K562 (cell line): ENCODE measurements at regions of chr10 and their contacts with region 1.

Region 1: GRCh38 chr10:80046629-80047441 is 31.6 kb upstream of the TMEM254 start:
- DNase-seq: peak; percentile 71 to 86 (median 84)
- ATAC-seq: peak; percentile 97
- H3K4me3 ChIP-seq: no peak overlapping the region
- H3K27ac ChIP-seq: no peak overlapping the region
- H3K4me1 ChIP-seq: no peaks in the 10 kb centered on the region; a peak in 1 of 5 replicates
- H3K27me3 ChIP-seq: peaks cover 0 to 10% of the 10 kb centered on the region in 2 experiments; a peak in 3 of 5 replicates
- CTCF ChIP-seq: peak; percentile 90 to 95 (median 92)
- EP300 ChIP-seq: no peak
- POLR2A ChIP-seq: no peak
- RAD21 ChIP-seq: peak; percentile 62 to 74

Region 2: GRCh38 chr10:79929409-79929904 is 117.4 kb before region 1 on chr10:
- CTCF ChIA-PET with region 1: no interaction called
- POLR2A ChIA-PET with region 1: no interaction called
- in situ Hi-C with region 1: no loop called
- intact Hi-C with region 1: loop called (anchors 5 kb)
- DNase-seq: peak; percentile 83 to 90 (median 88)
- ATAC-seq: peak; percentile 97
- H3K4me3 ChIP-seq: no peak overlapping the region
- H3K27ac ChIP-seq: no peak overlapping the region
- H3K4me1 ChIP-seq: peaks cover 3 to 4% of the 10 kb centered on the region in 2 experiments; a peak in 3 of 5 replicates
- H3K27me3 ChIP-seq: peaks cover 26 to 37% of the 10 kb centered on the region in 2 experiments
- CTCF ChIP-seq: peak; percentile 93 to 98 (median 97)
- EP300 ChIP-seq: no peak
- POLR2A ChIP-seq: no peak
- RAD21 ChIP-seq: peak; percentile 99